H1 (cell line): ENCODE measurements at regions of chr7 and their contacts with region 1.

Region 1: DNA sequence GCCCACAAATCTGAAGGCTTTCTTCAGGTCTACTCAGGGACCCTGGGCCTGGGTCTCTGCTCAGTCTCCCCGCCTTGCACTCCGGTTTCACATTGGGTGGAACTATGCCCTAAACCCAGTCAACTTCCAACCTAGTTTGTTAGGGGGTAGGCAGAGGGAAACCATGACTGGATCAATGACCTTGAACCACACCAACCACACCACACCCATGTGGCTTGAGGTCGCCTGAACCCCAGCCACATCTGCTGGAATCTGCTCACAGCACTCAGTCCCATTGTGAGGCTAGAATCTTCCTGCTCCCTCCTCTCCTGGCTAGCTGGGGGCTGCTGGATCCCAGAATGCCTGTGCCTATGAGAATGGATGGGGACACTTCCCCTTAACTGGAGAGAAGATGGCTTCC is 17.9 kb downstream of the RFC2 start:
- DNase-seq: no peak
- H3K4me3 ChIP-seq: no peak overlapping the region
- H3K27ac ChIP-seq: no peak overlapping the region
- H3K4me1 ChIP-seq: no peaks in the 10 kb centered on the region
- H3K27me3 ChIP-seq: no peaks in the 10 kb centered on the region; a peak in 1 of 7 replicates
- CTCF ChIP-seq: no peak
- EP300 ChIP-seq: no peak
- POLR2A ChIP-seq: no peak
- RAD21 ChIP-seq: no peak

Region 2: GRCh38 chr7:74223711-74224510 is 12.4 kb before region 1 on chr7:
- CTCF ChIA-PET with region 1: interaction called, 5 read pairs
- POLR2A ChIA-PET with region 1: interaction called, 19 read pairs
- DNase-seq: no peak
- H3K4me3 ChIP-seq: no peak overlapping the region
- H3K27ac ChIP-seq: no peak overlapping the region; the same call in 1 of the 2 replicates
- H3K4me1 ChIP-seq: peaks cover 0 to 2% (median 0%) of the 10 kb centered on the region in 4 experiments; a peak in 3 of 7 replicates
- H3K27me3 ChIP-seq: no peaks in the 10 kb centered on the region
- CTCF ChIP-seq: no peak
- EP300 ChIP-seq: no peak
- POLR2A ChIP-seq: no peak
- RAD21 ChIP-seq: no peak

Region 3: GRCh38 chr7:74269757-74270277 is 33.5 kb after region 1 on chr7:
- CTCF ChIA-PET with region 1: no interaction called
- POLR2A ChIA-PET with region 1: no interaction called
- DNase-seq: peak in 1 of 2 experiments; percentile 86
- H3K4me3 ChIP-seq: peak overlapping the region; percentile 24 to 78 (median 51); a peak in 7 of 8 replicates
- H3K27ac ChIP-seq: no peak overlapping the region
- H3K4me1 ChIP-seq: peaks cover 0 to 6% (median 5%) of the 10 kb centered on the region in 4 experiments; a peak in 6 of 7 replicates
- H3K27me3 ChIP-seq: no peaks in the 10 kb centered on the region; a peak in 1 of 7 replicates
- CTCF ChIP-seq: no peak
- EP300 ChIP-seq: no peak; a peak in 1 of 3 replicates
- POLR2A ChIP-seq: no peak
- RAD21 ChIP-seq: no peak; a peak in 1 of 4 replicates